SK-N-SH (cell line): ENCODE measurements at regions of chr15 and their contacts with region 1.

Region 1: GRCh38 chr15:62742409-62743171 is 300.0 kb upstream of the TPM1 start:
- DNase-seq: peak; percentile 77
- H3K4me3 ChIP-seq: peak overlapping the region; percentile 5 to 55; a peak in 3 of 4 replicates
- H3K27ac ChIP-seq: peak overlapping the region; percentile 81 to 99
- H3K4me1 ChIP-seq: peaks cover 34 to 42% of the 10 kb centered on the region in 2 experiments
- H3K27me3 ChIP-seq: no peaks in the 10 kb centered on the region
- CTCF ChIP-seq: peak; percentile 93
- EP300 ChIP-seq: peak; percentile 56 to 57; a peak in 1 of 4 replicates
- RAD21 ChIP-seq: peak; percentile 73

Region 2: GRCh38 chr15:62637574-62637897 is 105.1 kb before region 1 on chr15:
- CTCF ChIA-PET with region 1: interaction called, 15 read pairs
- POLR2A ChIA-PET with region 1: no interaction called
- DNase-seq: peak; percentile 77
- H3K4me3 ChIP-seq: no peak overlapping the region
- H3K27ac ChIP-seq: peak overlapping the region; percentile 47 to 87; a peak in 3 of 4 replicates
- H3K4me1 ChIP-seq: peaks cover 15 to 48% of the 10 kb centered on the region in 2 experiments; a peak in 3 of 4 replicates
- H3K27me3 ChIP-seq: no peaks in the 10 kb centered on the region
- CTCF ChIP-seq: no peak
- EP300 ChIP-seq: peak in 1 of 2 experiments; percentile 95; a peak in 3 of 4 replicates
- RAD21 ChIP-seq: peak; percentile 16; the same call in 1 of the 2 replicates

Region 3: DNA sequence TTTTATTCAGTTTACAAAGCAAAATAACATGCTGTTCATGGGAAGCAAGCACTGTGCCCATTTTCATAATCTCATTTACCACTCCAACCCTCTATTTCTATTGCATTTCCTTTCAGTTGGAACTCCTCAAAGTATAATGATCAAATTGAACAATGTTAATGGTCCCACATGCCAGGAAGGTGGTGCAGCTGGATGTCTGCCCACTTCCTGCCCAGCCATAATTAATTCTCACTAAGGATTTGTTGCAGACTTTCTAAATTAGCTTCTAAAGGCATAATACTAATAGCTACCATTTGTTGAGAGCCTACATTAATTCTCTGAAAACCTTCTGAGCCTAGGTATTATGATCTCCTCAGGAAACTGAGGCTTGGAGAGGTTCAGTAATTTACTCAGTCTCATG is 16.1 kb before region 1 on chr15:
- CTCF ChIA-PET with region 1: interaction called, 17 read pairs
- POLR2A ChIA-PET with region 1: no interaction called
- DNase-seq: no peak
- H3K4me3 ChIP-seq: no peak overlapping the region
- H3K27ac ChIP-seq: no peak overlapping the region
- H3K4me1 ChIP-seq: peaks cover 3 to 4% of the 10 kb centered on the region in 2 experiments; a peak in 2 of 4 replicates
- H3K27me3 ChIP-seq: no peaks in the 10 kb centered on the region
- CTCF ChIP-seq: no peak
- EP300 ChIP-seq: no peak
- RAD21 ChIP-seq: no peak

Region 4: GRCh38 chr15:62758126-62758951 is 15.7 kb after region 1 on chr15:
- CTCF ChIA-PET with region 1: interaction called, 89 read pairs
- POLR2A ChIA-PET with region 1: interaction called, 4 read pairs
- DNase-seq: peak; percentile 38
- H3K4me3 ChIP-seq: peak overlapping the region in 1 of 2 experiments; percentile 1; a peak in 1 of 4 replicates
- H3K27ac ChIP-seq: peak overlapping the region; percentile 82 to 84
- H3K4me1 ChIP-seq: peaks cover 21 to 22% of the 10 kb centered on the region in 2 experiments
- H3K27me3 ChIP-seq: no peaks in the 10 kb centered on the region
- CTCF ChIP-seq: no peak
- EP300 ChIP-seq: no peak
- RAD21 ChIP-seq: no peak